Activated CD4-positive, alpha-beta T cell treated with anti-CD3 and anti-CD28 coated beads, Interleukin-2, amount 10 ng/mL, durations not matched to agents 24 days and 14 days (primary cell): ENCODE measurements at regions of chr4 and their contacts with region 1.

Region 1: DNA sequence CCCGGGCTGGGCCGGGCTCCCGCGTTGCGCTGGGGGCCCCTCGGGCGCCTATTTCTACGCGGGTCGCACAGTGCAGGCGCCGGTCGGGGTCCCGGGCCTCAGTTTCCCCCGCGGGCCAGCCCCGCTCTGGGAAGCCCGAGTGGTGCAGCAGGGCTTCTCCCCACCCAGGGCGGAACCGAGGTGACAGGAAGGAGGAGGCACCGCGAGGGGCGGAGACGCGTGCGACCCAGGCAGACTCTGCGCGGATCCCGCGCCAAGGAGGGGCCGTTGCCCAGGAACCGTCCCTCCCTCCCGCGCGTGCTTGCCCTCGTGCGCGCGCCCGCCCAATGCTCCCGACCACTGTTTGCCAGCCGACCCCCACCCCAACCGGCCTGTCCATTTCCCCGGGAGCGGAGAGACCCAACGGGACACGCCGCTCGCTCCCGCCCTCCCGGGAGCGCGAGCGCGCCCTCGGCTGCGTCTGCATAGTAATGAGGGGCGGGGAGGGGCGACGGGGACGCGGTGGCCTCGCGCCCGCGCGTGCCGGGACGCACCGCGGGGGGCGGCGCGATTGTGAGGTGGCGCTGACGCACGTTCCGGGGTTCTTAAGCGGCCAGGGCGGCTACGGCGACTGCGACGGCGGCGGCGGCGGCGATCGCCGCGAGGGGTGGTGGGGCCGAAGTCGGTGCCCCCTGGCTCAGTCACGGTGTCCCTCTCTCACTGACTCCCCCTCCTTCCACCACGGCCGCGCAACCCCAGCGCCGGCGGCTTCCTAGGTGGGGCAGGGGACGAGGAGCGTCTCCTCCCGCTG is at the start of gene CPEB2:
- DNase-seq: peak; percentile 97
- H3K4me3 Mint-ChIP-seq: peak within 1 kb of the TSS; percentile 85
- H3K27ac Mint-ChIP-seq: peak within 1 kb of the TSS; percentile 91
- H3K4me1 Mint-ChIP-seq: peaks cover 21% of the 10 kb centered on the region
- H3K27me3 Mint-ChIP-seq: no peaks in the 10 kb centered on the region
- total RNA-seq, gene CPEB2: 12.4 and 15.0 TPM in 2 replicates

Region 2: DNA sequence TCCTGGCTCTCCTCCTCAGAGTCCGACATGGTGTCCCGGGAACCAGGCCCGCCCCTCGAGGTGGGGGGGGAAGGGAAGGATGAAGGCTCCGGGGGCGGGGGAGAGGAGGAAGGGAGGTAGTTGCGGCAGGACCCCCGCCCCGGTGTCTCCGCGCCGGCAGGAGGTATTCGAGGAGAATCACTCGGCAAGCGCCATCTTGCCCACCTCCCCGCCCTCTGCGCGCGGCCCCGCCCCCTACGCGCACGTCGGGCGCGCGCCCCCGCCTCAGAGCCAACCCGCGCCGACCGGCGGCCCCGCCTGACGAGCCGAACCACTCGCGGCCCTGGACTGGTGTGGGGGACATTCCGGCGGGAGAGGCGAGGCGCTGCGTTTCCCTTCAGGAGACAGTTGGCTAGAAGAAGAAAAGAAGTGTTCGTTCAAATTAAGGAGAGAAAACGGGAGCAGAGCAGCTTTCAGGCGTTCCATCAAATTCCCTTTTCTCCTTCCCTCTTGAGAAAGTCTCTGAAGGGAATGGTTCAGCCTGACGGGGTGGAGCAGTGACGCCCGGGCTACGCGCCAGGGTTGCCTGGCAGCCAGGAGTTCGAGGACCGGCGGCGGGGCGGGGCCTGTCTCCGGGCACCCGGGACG is 1517.8 kb before region 1 on chr4 and contains the start of gene RAB28:
- intact Hi-C with region 1: loop called (anchors 2 kb)
- DNase-seq: peak; percentile 98
- H3K4me3 Mint-ChIP-seq: peak within 1 kb of the TSS; percentile 96
- H3K27ac Mint-ChIP-seq: peak within 1 kb of the TSS; percentile 100
- H3K4me1 Mint-ChIP-seq: peaks cover 21% of the 10 kb centered on the region
- H3K27me3 Mint-ChIP-seq: peaks cover 14% of the 10 kb centered on the region
- total RNA-seq, gene RAB28: 19.5 and 20.5 TPM in 2 replicates

Region 3: DNA sequence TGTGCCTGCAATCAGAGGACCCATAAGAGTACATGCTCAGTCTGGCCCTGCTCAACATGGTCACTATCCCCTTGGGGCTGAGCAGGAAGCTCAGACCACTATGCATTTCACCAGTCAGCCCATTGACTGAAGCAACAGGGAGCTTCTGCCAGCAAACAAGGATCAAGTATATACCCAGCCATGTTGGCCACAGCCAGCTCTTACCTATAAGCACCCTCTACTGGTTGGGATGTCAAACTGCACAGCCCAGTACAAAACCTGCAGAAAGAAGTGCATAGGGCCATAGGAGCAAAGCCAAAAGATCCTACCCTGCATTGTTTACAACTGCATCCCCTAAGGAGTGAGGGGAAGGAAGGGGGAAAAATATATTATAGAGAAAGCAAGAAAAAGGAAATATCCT is 214.2 kb before region 1 on chr4:
- intact Hi-C with region 1: loop called (anchors 1 kb)
- DNase-seq: peak; percentile 57
- H3K4me3 Mint-ChIP-seq: no peak overlapping the region
- H3K27ac Mint-ChIP-seq: no peak overlapping the region
- H3K4me1 Mint-ChIP-seq: peaks cover 30% of the 10 kb centered on the region
- H3K27me3 Mint-ChIP-seq: no peaks in the 10 kb centered on the region

Region 4: GRCh38 chr4:15018361-15018760 is 16.3 kb after region 1 on chr4:
- intact Hi-C with region 1: loop called (anchors 1 kb)
- DNase-seq: no peak
- H3K4me3 Mint-ChIP-seq: peak overlapping the region; percentile 38
- H3K27ac Mint-ChIP-seq: peak overlapping the region; percentile 62
- H3K4me1 Mint-ChIP-seq: peaks cover 38% of the 10 kb centered on the region
- H3K27me3 Mint-ChIP-seq: no peaks in the 10 kb centered on the region

Region 5: GRCh38 chr4:15655229-15656037 is 653.4 kb after region 1 on chr4 and contains the start of gene FBXL5:
- intact Hi-C with region 1: loop called (anchors 1 kb)
- DNase-seq: peak; percentile 96
- H3K4me3 Mint-ChIP-seq: peak within 1 kb of the TSS; percentile 99
- H3K27ac Mint-ChIP-seq: peak within 1 kb of the TSS; percentile 96
- H3K4me1 Mint-ChIP-seq: peaks cover 55% of the 10 kb centered on the region
- H3K27me3 Mint-ChIP-seq: peaks cover 1% of the 10 kb centered on the region
- total RNA-seq, gene FBXL5: 28.9 and 31.2 TPM in 2 replicates

Region 6: GRCh38 chr4:16225863-16226815 is 1224.1 kb after region 1 on chr4 and contains the start of gene TAPT1:
- intact Hi-C with region 1: loop called (anchors 10 kb)
- DNase-seq: peak; percentile 94
- H3K4me3 Mint-ChIP-seq: peak within 1 kb of the TSS; percentile 90
- H3K27ac Mint-ChIP-seq: peak within 1 kb of the TSS; percentile 98
- H3K4me1 Mint-ChIP-seq: peaks cover 45% of the 10 kb centered on the region
- H3K27me3 Mint-ChIP-seq: no peaks in the 10 kb centered on the region
- total RNA-seq, gene TAPT1: 27.2 and 29.3 TPM in 2 replicates